ENCODE measurements at regions of chr14 and their contacts with region 1.

Region 1: DNA sequence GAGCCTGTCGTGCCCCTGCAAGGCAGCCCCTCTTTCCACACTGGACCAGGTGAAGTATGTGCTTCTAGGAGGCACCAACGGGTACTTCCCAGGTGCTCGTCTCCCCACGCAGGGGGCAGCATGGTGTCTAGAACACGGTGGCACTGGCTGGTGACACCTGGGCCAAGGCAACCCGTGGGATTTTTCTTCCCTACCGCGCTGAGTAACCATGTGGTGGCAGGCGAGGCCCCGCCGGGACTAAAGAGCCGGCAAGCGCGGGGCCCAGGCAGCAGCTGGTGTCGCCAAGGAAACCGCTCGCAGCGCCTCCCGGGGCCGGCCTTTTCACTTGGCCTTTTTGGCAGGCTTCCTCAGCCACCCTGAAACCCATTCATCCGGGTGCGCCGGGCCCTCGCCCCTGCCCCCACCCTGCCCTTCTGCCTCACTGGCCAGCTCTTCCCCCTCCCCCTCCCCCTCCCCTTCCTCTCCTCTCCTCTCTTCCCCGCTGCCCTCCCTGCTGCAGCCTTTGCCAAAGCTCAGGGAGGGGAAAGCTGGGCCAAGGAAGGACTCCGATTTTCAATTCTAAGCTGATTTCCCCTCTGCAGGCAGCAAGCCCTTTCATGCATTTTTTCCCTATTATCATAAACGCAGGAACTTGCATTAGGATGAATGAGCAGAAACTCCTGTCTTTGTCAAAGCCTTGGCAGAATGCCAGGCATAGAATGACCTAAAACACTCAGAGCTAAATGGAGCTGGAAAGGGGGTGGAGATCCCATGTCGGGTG is 81.2 kb downstream of the IRF2BPL start:
- DNase-seq: peak; percentile 77 to 89 (median 88)
- H3K4me3 ChIP-seq: peak overlapping the region in 1 of 3 experiments; percentile 62
- H3K4me3 Mint-ChIP-seq: peak overlapping the region; percentile 59 to 77
- H3K27ac ChIP-seq: peak overlapping the region in 1 of 2 donors; percentile 74
- H3K27ac Mint-ChIP-seq: peak overlapping the region; percentile 56 to 90 (median 65)
- H3K4me1 ChIP-seq: peaks cover 29 to 36% of the 10 kb centered on the region in 2 donors
- H3K4me1 Mint-ChIP-seq: peaks cover 36% of the 10 kb centered on the region
- H3K27me3 ChIP-seq: no peaks in the 10 kb centered on the region
- H3K27me3 Mint-ChIP-seq: peaks cover 2 to 9% (median 4%) of the 10 kb centered on the region in 3 donors
- CTCF ChIP-seq: peak; percentile 68

Region 2: DNA sequence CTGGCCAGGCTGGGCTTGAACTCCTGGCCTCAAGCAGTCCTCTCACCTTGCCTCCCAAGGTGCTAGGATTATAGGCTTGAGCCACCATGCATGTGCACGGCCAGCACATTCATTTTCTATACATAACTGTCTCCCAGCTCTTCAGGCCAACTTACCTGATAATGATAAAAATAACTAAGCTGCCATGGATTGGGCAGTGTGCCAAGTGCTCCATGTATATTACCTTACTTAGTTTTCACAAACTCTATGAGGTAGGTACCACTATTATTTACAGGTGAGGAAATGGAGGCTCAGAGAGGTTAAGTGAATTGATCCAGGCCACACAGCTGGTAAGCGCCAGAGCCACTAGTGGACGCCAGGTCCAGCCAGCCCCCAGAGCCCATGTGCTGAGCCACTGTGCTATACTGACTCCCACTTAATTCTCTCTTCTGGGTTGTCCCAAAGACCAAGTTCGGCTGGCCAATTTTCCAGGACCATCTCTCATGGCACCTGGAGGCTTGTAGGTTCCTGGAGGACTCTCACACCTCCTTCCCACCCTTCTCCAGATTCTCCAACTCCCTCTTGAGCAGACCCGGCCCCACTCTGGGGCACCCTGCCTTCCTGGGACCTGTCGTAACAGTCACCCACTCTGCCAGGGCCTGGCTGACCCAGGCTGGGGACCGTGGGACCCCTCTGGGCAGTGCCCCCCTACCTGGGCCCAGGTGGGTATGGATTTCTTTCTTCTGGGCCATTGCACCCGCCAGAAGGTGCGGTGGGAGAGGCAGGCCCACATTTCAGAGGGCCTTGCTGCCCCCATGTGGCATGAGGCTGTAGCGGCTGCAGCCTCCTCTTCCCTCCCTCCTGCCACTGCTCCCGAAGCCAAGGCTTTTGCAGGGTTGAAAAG is 120.6 kb after region 1 on chr14:
- intact Hi-C with region 1: loop called in 1 of 2 experiments (anchors 5 kb)
- DNase-seq: peak in 2 of 3 donors; percentile 43 to 47
- H3K4me3 ChIP-seq: no peak overlapping the region
- H3K4me3 Mint-ChIP-seq: peak overlapping the region in 1 of 2 donors; percentile 6
- H3K27ac ChIP-seq: no peak overlapping the region
- H3K27ac Mint-ChIP-seq: no peak overlapping the region
- H3K4me1 ChIP-seq: peaks cover 5 to 11% of the 10 kb centered on the region in 2 donors
- H3K4me1 Mint-ChIP-seq: peaks cover 12% of the 10 kb centered on the region
- H3K27me3 ChIP-seq: no peaks in the 10 kb centered on the region
- H3K27me3 Mint-ChIP-seq: peaks cover 7 to 8% (median 7%) of the 10 kb centered on the region in 3 donors
- CTCF ChIP-seq: peak; percentile 87

Region 3: GRCh38 chr14:77084985-77085384 is 137.7 kb after region 1 on chr14:
- intact Hi-C with region 1: no loop called
- DNase-seq: no peak
- H3K4me3 ChIP-seq: no peak overlapping the region
- H3K4me3 Mint-ChIP-seq: no peak overlapping the region
- H3K27ac ChIP-seq: no peak overlapping the region
- H3K27ac Mint-ChIP-seq: peak overlapping the region in 2 of 7 donors; percentile 4
- H3K4me1 ChIP-seq: no peaks in the 10 kb centered on the region
- H3K4me1 Mint-ChIP-seq: peaks cover 6% of the 10 kb centered on the region
- H3K27me3 ChIP-seq: no peaks in the 10 kb centered on the region
- H3K27me3 Mint-ChIP-seq: peaks cover 2 to 6% (median 3%) of the 10 kb centered on the region in 3 donors
- CTCF ChIP-seq: no peak